Activated CD4-positive, alpha-beta T cell treated with anti-CD3 and anti-CD28 coated beads for 36 hours (primary cell): ENCODE measurements at regions of chrX and their contacts with region 1.

Region 1: DNA sequence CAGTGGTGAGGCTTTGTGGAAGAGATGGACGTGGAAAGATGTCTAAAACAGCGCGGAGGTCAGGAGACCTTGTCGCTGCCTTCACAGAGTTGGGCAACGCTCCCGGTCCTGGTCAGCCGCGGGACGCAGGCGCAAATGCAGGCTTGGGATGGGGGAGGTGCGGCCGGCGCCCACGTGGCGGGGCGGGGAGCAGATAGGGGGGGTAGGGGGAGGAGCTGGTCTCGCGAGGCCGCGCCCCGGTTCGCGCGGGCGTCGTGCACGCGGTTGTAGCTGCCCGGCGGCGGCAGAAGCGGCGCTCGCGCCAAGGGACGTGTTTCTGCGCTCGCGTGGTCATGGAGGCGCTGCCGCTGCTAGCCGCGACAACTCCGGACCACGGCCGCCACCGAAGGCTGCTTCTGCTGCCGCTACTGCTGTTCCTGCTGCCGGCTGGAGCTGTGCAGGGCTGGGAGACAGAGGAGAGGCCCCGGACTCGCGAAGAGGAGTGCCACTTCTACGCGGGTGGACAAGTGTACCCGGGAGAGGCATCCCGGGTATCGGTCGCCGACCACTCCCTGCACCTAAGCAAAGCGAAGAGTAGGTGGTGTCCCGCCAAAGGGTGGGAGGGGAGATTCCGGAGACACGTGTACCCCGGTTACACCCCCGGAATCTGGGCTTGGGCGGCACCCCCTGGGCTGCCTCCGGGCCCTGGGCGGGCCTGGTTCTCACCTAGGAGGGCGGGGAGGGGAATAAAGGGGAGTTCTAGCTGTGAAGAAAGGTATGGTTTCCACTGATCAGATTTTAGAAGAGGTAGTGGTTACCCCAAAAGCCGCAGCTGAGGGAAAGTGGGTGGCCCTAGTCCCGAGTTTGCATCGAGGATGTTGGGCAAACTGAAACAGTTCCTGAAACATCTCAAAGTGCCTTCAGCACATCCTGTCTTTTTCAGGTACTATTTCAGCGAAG is at the start of gene PRDX4:
- DNase-seq: peak; percentile 90
- ATAC-seq: peak; percentile 67
- H3K4me3 Mint-ChIP-seq: peak within 1 kb of the TSS; percentile 83
- H3K27ac Mint-ChIP-seq: peak within 1 kb of the TSS; percentile 92
- H3K4me1 Mint-ChIP-seq: peaks cover 35% of the 10 kb centered on the region
- H3K27me3 Mint-ChIP-seq: no peaks in the 10 kb centered on the region
- total RNA-seq, gene PRDX4: 48.8 to 51.5 TPM

Region 2: DNA sequence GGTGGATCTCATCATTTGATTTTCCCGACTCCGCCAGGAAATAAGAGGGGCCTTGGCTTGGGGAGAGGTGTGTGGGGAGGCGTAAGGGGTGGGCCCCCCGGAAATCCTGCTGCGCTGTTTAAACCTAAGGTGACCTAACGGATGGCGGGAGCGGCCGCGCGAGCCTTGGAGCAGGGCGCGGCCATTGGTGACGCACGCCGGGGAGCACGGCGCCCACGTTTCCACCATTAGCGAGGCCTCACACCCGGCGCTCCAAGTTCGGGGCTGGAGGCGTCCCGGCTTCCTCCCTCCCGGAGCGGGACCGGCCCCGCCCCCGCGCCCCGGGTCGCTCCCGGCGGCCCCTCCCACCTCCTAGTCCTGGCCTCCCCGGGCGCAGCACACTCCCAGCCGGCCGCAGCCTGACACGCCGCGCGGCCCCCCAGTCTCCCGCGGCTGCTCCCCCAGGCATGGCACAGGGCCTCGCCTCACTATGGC is 1727.1 kb before region 1 on chrX and contains the start of gene SMS:
- CTCF ChIA-PET with region 1: no interaction called
- POLR2A ChIA-PET with region 1: no interaction called
- intact Hi-C with region 1: loop called in 1 of 2 experiments (anchors 2 kb)
- DNase-seq: peak; percentile 78
- ATAC-seq: peak; percentile 65
- H3K4me3 Mint-ChIP-seq: peak within 1 kb of the TSS; percentile 83
- H3K27ac Mint-ChIP-seq: peak within 1 kb of the TSS; percentile 91
- H3K4me1 Mint-ChIP-seq: peaks cover 32% of the 10 kb centered on the region
- H3K27me3 Mint-ChIP-seq: no peaks in the 10 kb centered on the region
- total RNA-seq, gene SMS: 100 to 124 TPM

Region 3: GRCh38 chrX:23134136-23134535 is 533.4 kb before region 1 on chrX:
- CTCF ChIA-PET with region 1: no interaction called
- POLR2A ChIA-PET with region 1: no interaction called
- intact Hi-C with region 1: no loop called
- DNase-seq: no peak
- ATAC-seq: no peak
- H3K4me3 Mint-ChIP-seq: no peak overlapping the region
- H3K27ac Mint-ChIP-seq: no peak overlapping the region
- H3K4me1 Mint-ChIP-seq: no peaks in the 10 kb centered on the region
- H3K27me3 Mint-ChIP-seq: no peaks in the 10 kb centered on the region

Region 4: GRCh38 chrX:23548164-23548563 is 119.3 kb before region 1 on chrX:
- CTCF ChIA-PET with region 1: no interaction called
- POLR2A ChIA-PET with region 1: no interaction called
- intact Hi-C with region 1: no loop called
- DNase-seq: no peak
- ATAC-seq: no peak
- H3K4me3 Mint-ChIP-seq: no peak overlapping the region
- H3K27ac Mint-ChIP-seq: no peak overlapping the region
- H3K4me1 Mint-ChIP-seq: no peaks in the 10 kb centered on the region
- H3K27me3 Mint-ChIP-seq: no peaks in the 10 kb centered on the region

Region 5: GRCh38 chrX:23626651-23627050 is 40.9 kb before region 1 on chrX:
- CTCF ChIA-PET with region 1: no interaction called
- POLR2A ChIA-PET with region 1: no interaction called
- intact Hi-C with region 1: no loop called
- DNase-seq: no peak
- ATAC-seq: no peak
- H3K4me3 Mint-ChIP-seq: no peak overlapping the region
- H3K27ac Mint-ChIP-seq: no peak overlapping the region
- H3K4me1 Mint-ChIP-seq: no peaks in the 10 kb centered on the region
- H3K27me3 Mint-ChIP-seq: peaks cover 5% of the 10 kb centered on the region

Region 6: DNA sequence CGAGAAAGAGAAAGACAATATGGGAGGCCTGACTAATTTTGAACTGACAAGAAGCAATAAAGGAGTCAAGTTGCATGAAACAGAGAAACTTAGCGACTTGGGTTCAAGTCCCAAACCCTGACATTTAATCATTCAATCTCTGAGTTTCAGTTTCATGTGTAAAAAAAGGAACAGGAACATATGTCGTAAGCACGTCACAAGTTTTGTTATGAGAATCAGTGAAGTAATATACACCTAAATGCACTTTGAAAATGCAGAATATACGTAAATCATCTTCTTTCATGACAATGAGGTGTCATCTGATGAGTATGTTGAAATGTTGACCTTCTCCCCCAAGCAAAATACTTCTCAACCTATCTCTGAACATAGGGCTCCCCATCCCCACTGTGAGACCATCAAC is 65.2 kb after region 1 on chrX:
- CTCF ChIA-PET with region 1: interaction called, 3 read pairs
- POLR2A ChIA-PET with region 1: no interaction called
- intact Hi-C with region 1: loop called (anchors 1 to 2 kb)
- DNase-seq: no peak
- ATAC-seq: peak; percentile 83
- H3K4me3 Mint-ChIP-seq: peak overlapping the region; percentile 39
- H3K27ac Mint-ChIP-seq: peak overlapping the region; percentile 89
- H3K4me1 Mint-ChIP-seq: peaks cover 36% of the 10 kb centered on the region
- H3K27me3 Mint-ChIP-seq: no peaks in the 10 kb centered on the region

Region 7: DNA sequence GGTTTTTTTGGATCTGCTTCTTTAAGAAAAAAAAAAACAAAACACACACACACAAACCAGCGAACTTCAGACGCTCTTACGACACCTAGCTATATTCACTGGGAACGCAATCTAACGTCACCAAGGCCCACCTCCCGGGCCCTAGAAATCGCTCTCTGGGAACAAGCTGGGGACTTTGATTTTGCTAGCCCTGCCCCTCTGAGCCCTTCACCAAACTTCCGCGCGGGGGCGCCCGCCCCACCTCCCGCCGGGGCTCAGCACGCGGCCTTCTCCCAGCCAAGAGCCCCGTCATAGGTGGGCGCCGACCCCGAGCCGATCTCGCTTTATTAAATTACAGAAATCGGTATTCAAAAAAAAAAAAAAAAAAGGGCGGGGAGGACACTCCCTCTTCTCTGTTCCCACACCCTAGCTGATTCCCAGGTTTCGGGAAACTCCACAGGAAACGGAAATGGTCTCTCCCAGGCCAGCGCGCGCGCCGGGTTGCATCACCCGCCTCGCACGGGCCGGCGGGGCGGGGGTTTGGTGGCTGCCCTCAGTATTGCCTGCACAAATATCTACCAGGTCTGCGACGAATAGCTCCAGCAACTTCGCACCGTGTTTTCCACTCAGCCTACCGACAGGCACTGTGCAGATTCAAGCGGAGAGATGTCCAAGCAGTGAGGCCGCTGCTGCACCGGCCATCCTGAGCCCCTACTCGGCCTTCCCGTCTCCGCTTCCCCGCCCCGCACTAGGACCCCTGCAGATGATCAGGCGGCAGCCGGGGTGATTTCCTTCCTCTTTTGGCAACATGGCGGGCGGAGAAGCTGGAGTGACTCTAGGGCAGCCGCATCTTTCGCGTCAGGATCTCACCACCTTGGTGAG is 386.9 kb after region 1 on chrX and contains the start of gene EIF2S3:
- CTCF ChIA-PET with region 1: no interaction called
- POLR2A ChIA-PET with region 1: no interaction called
- intact Hi-C with region 1: loop called (anchors 1 to 2 kb)
- DNase-seq: peak; percentile 89
- ATAC-seq: peak; percentile 89
- H3K4me3 Mint-ChIP-seq: no peak within 1 kb of the TSS
- H3K27ac Mint-ChIP-seq: no peak within 1 kb of the TSS
- H3K4me1 Mint-ChIP-seq: peaks cover 7% of the 10 kb centered on the region
- H3K27me3 Mint-ChIP-seq: no peaks in the 10 kb centered on the region
- total RNA-seq, gene EIF2S3: 316 to 336 TPM

Region 8: DNA sequence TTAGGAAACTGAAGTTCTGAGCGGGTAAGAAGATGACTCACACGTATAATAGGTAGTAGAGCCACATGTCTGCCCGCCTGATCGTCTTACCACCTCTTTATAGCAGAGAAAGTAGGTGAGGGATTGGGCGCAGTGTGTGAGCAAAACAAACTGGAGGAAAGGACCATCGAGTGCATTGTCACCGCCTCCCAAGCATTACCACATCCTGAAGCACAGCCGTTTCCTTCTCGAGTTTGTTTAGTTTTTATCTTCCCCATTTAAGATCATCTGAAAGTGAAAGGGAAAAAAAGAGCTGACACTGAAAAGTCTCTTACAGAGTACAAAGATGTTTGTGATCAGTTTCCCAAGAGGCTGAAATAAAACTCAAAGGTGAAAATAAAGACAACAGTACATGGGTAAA is 812.4 kb after region 1 on chrX:
- CTCF ChIA-PET with region 1: no interaction called
- POLR2A ChIA-PET with region 1: no interaction called
- intact Hi-C with region 1: loop called in 1 of 2 experiments (anchors 10 kb)
- DNase-seq: peak; percentile 82
- ATAC-seq: peak; percentile 94
- H3K4me3 Mint-ChIP-seq: peak overlapping the region; percentile 68
- H3K27ac Mint-ChIP-seq: peak overlapping the region; percentile 91
- H3K4me1 Mint-ChIP-seq: peaks cover 75% of the 10 kb centered on the region
- H3K27me3 Mint-ChIP-seq: no peaks in the 10 kb centered on the region